ENCODE measurements at regions of chr12 and their contacts with region 1.

Region 1: DNA sequence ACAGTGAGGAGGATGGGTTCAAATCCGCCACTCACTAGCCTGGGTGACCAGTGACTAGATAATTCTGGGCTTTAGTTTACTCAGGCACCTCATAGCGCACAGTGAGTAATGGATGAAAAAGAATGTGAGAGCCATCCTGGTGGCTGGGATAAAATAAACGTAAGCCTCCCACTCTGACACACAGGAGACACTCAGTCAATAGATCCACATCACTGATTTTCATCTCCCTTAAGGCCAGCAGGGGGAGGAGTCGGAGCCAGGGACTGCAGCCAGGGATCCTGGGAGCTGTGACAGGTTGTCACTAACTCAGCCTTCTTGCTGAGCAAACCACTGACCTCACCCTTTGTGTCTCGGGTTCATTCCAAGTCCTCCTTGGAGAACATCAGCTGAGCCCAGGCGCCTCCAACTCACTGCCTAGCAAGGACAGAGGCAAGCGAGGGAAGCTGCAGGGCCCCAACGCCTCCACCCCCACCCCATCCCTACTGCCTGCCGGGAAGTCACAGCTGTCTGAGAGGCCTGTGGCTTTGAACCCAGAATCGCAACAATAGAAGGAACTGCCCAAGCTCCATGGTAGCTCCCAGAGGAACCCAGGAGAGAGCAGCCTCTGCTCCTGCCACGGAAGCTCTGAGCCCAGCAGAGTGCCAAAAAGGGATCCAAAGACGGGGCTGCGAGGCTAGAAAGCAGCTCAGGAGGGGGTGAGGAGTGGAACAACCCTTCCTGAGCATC is 30.7 kb downstream of the PXN start:
- DNase-seq: peak; percentile 73

Region 2: DNA sequence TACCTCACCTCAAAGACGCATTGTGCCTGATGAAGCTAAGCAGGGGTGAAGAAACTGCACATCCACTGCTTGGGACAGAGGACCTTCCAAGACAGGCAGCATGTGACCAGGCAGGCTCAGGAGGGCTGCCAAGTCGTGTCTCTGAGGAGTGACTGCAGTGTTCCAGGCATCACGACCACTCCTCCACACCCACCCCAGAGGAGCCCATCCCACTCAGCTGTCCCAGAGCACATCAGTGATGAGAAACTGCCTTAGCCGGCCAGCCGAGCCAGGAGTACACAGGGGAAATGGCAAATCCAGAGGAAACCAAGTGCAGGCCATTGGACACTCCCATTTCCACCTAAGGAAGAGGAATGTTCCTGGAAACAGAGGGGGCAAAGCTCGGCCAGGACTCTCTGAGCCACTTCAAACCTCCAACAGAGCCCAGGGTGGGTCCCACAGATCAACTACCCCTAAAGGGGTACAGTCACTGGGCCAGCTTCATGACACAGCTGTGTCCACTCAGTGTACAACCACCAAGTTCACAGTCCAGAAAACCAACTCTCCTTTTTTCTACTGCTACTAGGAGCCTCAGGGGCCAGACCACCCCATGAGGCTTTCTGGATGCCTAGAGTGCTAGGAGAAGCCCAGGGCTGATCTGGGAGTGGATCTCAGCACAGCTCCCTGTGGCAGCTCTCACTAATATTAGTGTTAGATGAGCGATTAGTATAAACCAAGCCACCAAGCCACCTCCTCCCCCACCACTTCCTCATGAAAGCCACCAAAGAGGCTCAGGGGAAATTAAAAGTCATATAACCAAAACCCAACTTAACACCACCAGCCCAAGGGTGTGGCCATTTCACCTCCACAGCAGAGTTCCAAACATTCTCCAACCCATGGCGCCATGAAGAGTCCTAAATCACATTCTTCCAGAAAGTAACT is 15.3 kb after region 1 on chr12:
- CTCF ChIA-PET with region 1: interaction called, 20 read pairs
- POLR2A ChIA-PET with region 1: interaction called, 3 read pairs
- DNase-seq: no peak

Region 3: GRCh38 chr12:120265473-120266179 is 30.8 kb after region 1 on chr12 and contains the start of gene PXN:
- CTCF ChIA-PET with region 1: interaction called, 222 read pairs
- POLR2A ChIA-PET with region 1: interaction called, 139 read pairs
- DNase-seq: peak; percentile 97

Region 4: GRCh38 chr12:120276734-120277133 is 41.9 kb after region 1 on chr12:
- CTCF ChIA-PET with region 1: interaction called, 222 read pairs
- POLR2A ChIA-PET with region 1: interaction called, 3 read pairs
- DNase-seq: no peak

Measured in HEK293T (cell line).